Natural killer cell (primary cell): ENCODE measurements at regions of chr9 and their contacts with region 1.

Region 1: DNA sequence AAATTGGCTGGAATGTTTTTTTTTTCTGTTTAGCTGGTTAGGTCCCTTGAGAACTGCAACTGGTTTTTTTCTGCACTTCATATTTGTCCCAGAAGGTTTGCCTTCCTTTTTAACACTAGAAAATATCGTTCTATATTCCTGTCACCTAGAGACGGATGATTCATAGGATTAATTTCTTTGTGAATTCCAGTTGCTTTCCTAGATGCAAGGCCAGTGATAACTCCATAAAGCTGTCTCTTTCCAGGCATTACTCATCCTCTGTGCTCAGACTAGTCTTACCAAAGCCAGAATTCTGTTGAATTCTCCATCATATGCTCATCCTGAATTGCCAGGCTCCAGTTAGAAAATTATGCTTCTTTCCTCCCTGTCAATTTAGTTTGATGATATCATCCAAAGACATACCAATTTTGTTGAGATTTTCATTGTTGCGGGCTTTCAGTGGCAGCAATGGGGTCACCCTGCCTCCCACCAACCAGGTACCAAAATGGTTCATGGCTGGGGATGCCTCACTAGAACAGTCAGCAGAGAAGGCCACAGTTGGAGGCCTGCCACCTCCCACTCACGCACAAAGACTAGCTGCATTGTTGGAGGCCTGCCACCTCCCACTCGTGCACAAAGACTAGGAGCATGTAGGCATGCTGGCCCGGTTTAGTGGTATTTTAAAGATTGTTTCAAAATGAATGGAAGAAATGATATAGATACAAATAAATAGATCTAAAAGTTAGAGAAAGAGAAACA is 8.5 kb downstream of the BAAT start:
- DNase-seq: no peak
- ATAC-seq: no peak
- H3K4me3 ChIP-seq: no peak overlapping the region
- H3K4me3 Mint-ChIP-seq: no peak overlapping the region
- H3K27ac ChIP-seq: no peak overlapping the region
- H3K27ac Mint-ChIP-seq: no peak overlapping the region
- H3K4me1 ChIP-seq: no peaks in the 10 kb centered on the region
- H3K4me1 Mint-ChIP-seq: no peaks in the 10 kb centered on the region
- H3K27me3 ChIP-seq: no peaks in the 10 kb centered on the region
- H3K27me3 Mint-ChIP-seq: peaks cover 6 to 20% of the 10 kb centered on the region in 2 donors
- CTCF ChIP-seq: no peak

Region 2: GRCh38 chr9:101139082-101139481 is 237.2 kb before region 1 on chr9:
- intact Hi-C with region 1: no loop called
- DNase-seq: no peak
- ATAC-seq: no peak
- H3K4me3 ChIP-seq: no peak overlapping the region
- H3K4me3 Mint-ChIP-seq: no peak overlapping the region
- H3K27ac ChIP-seq: no peak overlapping the region
- H3K27ac Mint-ChIP-seq: no peak overlapping the region
- H3K4me1 ChIP-seq: no peaks in the 10 kb centered on the region
- H3K4me1 Mint-ChIP-seq: no peaks in the 10 kb centered on the region
- H3K27me3 ChIP-seq: no peaks in the 10 kb centered on the region
- H3K27me3 Mint-ChIP-seq: no peaks in the 10 kb centered on the region
- CTCF ChIP-seq: no peak

Region 3: GRCh38 chr9:101427957-101428655 is 51.8 kb after region 1 on chr9:
- intact Hi-C with region 1: loop called (anchors 5 kb)
- DNase-seq: no peak
- ATAC-seq: no peak
- H3K4me3 ChIP-seq: no peak overlapping the region
- H3K4me3 Mint-ChIP-seq: no peak overlapping the region
- H3K27ac ChIP-seq: no peak overlapping the region
- H3K27ac Mint-ChIP-seq: no peak overlapping the region
- H3K4me1 ChIP-seq: no peaks in the 10 kb centered on the region
- H3K4me1 Mint-ChIP-seq: no peaks in the 10 kb centered on the region
- H3K27me3 ChIP-seq: no peaks in the 10 kb centered on the region
- H3K27me3 Mint-ChIP-seq: peaks cover 0 to 6% of the 10 kb centered on the region in 2 donors
- CTCF ChIP-seq: no peak